K562 (cell line): ENCODE measurements at regions of chr19 and their contacts with region 1.

Region 1: DNA sequence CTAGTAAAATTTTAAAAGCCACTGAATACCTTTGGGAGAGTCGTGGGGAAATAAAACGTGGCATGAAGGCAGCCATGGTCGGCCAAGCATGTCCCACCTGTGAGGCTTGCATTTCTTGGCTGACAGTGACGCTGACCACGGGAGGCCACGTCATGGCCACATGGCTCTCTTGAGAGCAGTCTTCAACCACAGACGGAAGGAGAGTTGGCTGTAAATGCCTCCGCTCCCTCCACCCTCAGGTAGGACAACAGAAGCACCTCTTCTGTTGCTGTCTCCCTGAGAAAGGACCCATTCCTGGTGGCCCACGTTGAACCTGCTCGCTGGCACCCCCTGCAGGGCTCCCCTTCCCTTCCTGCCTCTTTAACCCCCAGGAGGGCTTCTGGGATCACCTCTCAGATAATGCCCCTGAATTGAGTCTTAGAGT is 10.6 kb upstream of the LRRC25 start:
- DNase-seq: peak; percentile 63 to 81 (median 72)
- ATAC-seq: peak; percentile 86
- H3K4me3 ChIP-seq: no peak overlapping the region
- H3K27ac ChIP-seq: peak overlapping the region; percentile 39; the same call in 1 of the 3 replicates
- H3K4me1 ChIP-seq: peaks cover 3 to 25% of the 10 kb centered on the region in 2 experiments; a peak in 3 of 5 replicates
- H3K27me3 ChIP-seq: no peaks in the 10 kb centered on the region
- CTCF ChIP-seq: peak; percentile 82 to 89 (median 86)
- EP300 ChIP-seq: no peak
- POLR2A ChIP-seq: no peak
- RAD21 ChIP-seq: peak; percentile 55 to 89

Region 2: DNA sequence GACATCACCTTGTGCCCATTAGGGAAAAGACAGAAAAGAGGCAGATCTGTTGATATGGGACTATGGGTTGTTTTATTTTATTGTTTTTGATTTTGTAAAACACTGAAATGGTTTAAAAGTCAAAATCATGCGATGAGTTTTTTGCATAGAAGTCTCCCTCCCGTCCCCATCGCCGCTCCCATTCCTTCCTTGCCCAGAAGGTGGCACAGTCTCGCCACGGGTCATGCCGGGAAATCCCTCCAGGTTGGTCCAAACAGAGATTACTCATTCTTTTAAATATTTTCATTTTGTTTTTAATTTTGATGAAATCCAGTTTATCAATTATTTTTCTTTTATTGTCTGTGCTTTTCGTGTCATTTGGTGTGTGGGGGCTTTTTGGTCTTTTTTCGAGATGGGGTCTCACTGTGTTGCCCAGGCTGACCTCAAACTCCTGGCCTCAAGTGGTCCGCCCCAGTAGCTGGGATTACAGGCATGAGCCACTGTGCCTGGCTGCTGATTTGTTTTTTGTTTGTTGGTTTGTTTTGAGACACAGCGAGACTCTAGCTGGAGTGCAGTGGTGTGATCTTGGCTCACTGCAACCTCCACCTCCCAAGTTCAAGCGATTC is 58.4 kb before region 1 on chr19:
- CTCF ChIA-PET with region 1: interaction called, 34 read pairs
- POLR2A ChIA-PET with region 1: interaction called, 3 read pairs
- in situ Hi-C with region 1: loop called (anchors 5 kb)
- intact Hi-C with region 1: loop called (anchors 1 kb)
- DNase-seq: peak; percentile 59 to 73 (median 67)
- ATAC-seq: peak; percentile 78
- H3K4me3 ChIP-seq: no peak overlapping the region
- H3K27ac ChIP-seq: no peak overlapping the region
- H3K4me1 ChIP-seq: peaks cover 0 to 5% of the 10 kb centered on the region in 2 experiments; a peak in 1 of 5 replicates
- H3K27me3 ChIP-seq: no peaks in the 10 kb centered on the region
- CTCF ChIP-seq: peak; percentile 78 to 96 (median 86)
- EP300 ChIP-seq: peak; percentile 13; the same call in 1 of the 2 replicates
- POLR2A ChIP-seq: no peak
- RAD21 ChIP-seq: peak; percentile 89 to 91